ENCODE measurements at regions of chr20 and their contacts with region 1.

Region 1: DNA sequence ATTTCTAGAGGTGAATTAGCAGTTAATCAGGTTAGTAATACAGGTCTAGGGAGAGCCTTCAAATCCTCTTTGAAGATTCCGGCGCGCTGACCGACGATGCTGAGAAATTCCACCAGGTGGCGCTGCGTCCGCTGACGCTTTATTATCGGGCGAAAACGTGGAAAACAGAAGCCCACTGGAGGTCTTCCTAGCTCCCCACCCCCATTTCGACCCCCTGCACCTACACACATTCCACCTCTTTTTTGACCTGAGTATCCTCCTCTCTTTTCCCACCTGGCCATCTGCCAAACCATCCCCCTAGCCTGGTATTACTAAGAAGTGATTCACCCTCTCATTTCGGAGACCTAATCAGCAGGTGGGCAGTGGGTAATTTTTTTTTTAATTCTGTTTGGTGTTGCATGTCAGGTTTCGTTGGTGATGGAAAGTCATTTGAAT is 65.4 kb upstream of the RIN2 start:
- DNase-seq: peak; percentile 64
- ATAC-seq: peak; percentile 71
- H3K4me3 Mint-ChIP-seq: peak overlapping the region; percentile 49
- H3K27ac Mint-ChIP-seq: peak overlapping the region; percentile 76
- H3K4me1 Mint-ChIP-seq: peaks cover 11% of the 10 kb centered on the region
- H3K27me3 Mint-ChIP-seq: peaks cover 7% of the 10 kb centered on the region
- CTCF ChIP-seq: peak; percentile 76

Region 2: GRCh38 chr20:19725814-19726525 is 33.3 kb after region 1 on chr20:
- CTCF ChIA-PET with region 1: no interaction called
- POLR2A ChIA-PET with region 1: no interaction called
- intact Hi-C with region 1: loop called (anchors 2 kb)
- DNase-seq: no peak
- ATAC-seq: no peak
- H3K4me3 Mint-ChIP-seq: no peak overlapping the region
- H3K27ac Mint-ChIP-seq: no peak overlapping the region
- H3K4me1 Mint-ChIP-seq: peaks cover 37% of the 10 kb centered on the region
- H3K27me3 Mint-ChIP-seq: no peaks in the 10 kb centered on the region
- CTCF ChIP-seq: no peak

Region 3: DNA sequence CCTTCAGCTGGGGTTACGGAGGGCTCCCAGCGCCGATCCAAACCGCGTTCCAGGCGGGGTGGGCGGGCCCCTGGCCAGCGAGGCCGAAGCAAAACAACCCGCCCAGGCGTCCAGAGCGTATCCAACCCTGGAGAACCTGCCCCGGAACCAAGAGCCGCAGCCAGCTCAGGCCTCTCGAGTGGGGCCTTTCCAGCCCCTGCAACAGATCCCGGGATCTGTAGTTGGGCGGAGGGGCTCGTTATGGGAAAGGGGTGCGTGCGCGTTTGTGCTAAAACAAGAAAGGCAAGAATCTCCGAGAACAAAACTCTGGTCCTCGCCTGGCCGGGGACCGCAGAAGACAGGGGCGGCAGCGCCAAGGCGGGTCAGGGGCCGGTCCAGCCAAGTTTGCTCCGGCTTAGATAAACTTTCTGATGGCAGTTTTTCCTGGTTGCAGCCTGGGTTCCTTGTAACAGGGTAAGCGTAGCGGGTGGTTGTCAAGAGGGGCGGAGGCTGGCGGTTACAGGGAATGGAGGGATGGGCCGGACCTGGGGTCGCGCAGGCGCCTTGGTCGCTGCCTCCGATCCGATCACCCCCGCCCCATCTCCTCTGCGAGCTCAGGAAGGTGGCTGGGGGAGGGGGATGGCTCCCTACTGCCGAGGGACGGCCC is 64.9 kb after region 1 on chr20:
- CTCF ChIA-PET with region 1: interaction called, 3 read pairs
- POLR2A ChIA-PET with region 1: no interaction called
- intact Hi-C with region 1: loop called (anchors 2 kb)
- DNase-seq: peak; percentile 21
- ATAC-seq: peak; percentile 49
- H3K4me3 Mint-ChIP-seq: peak overlapping the region; percentile 83
- H3K27ac Mint-ChIP-seq: no peak overlapping the region
- H3K4me1 Mint-ChIP-seq: peaks cover 13% of the 10 kb centered on the region
- H3K27me3 Mint-ChIP-seq: peaks cover 38% of the 10 kb centered on the region
- CTCF ChIP-seq: no peak

Region 4: DNA sequence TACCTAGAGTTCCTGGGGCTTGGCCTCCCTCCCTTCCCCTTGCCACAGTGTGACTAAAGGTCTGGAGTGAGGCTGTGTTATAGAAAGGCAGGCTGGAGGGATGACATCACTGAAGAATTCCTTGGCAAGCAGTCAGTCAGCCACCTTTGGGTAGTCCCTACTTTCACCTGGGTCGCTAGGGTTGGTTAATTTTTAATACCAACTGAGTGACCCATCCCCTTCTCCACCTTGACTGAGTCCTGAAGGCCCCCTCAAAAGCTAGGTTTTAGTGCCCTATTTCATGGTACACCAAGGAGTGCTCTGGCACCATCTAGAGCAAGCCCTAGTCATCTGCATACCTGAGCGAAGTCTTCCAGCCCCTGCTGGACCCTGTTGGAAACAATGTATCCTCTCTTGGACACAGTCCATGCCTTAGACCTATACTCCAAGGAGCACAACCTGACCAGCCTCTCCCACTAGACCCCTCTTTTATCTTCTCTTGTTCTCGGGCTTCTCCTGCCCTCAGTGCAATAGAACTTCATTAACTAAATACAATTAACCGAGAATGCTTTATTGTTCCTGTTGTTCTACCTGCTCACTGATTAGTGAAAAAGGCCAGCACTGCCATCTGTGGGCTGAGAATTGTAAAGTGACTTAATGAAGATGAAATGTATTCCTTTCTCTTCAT is 109.9 kb after region 1 on chr20:
- CTCF ChIA-PET with region 1: interaction called, 11 read pairs
- POLR2A ChIA-PET with region 1: no interaction called
- intact Hi-C with region 1: loop called (anchors 1 kb)
- DNase-seq: no peak
- ATAC-seq: peak; percentile 54
- H3K4me3 Mint-ChIP-seq: no peak overlapping the region
- H3K27ac Mint-ChIP-seq: no peak overlapping the region
- H3K4me1 Mint-ChIP-seq: peaks cover 17% of the 10 kb centered on the region
- H3K27me3 Mint-ChIP-seq: no peaks in the 10 kb centered on the region
- CTCF ChIP-seq: no peak

Region 5: GRCh38 chr20:19903168-19903811 is 210.6 kb after region 1 on chr20:
- CTCF ChIA-PET with region 1: no interaction called
- POLR2A ChIA-PET with region 1: no interaction called
- intact Hi-C with region 1: no loop called
- DNase-seq: no peak
- ATAC-seq: peak; percentile 93
- H3K4me3 Mint-ChIP-seq: no peak overlapping the region
- H3K27ac Mint-ChIP-seq: no peak overlapping the region
- H3K4me1 Mint-ChIP-seq: peaks cover 11% of the 10 kb centered on the region
- H3K27me3 Mint-ChIP-seq: peaks cover 13% of the 10 kb centered on the region
- CTCF ChIP-seq: no peak